ENCODE measurements at regions of chr4 and their contacts with region 1.

Region 1: DNA sequence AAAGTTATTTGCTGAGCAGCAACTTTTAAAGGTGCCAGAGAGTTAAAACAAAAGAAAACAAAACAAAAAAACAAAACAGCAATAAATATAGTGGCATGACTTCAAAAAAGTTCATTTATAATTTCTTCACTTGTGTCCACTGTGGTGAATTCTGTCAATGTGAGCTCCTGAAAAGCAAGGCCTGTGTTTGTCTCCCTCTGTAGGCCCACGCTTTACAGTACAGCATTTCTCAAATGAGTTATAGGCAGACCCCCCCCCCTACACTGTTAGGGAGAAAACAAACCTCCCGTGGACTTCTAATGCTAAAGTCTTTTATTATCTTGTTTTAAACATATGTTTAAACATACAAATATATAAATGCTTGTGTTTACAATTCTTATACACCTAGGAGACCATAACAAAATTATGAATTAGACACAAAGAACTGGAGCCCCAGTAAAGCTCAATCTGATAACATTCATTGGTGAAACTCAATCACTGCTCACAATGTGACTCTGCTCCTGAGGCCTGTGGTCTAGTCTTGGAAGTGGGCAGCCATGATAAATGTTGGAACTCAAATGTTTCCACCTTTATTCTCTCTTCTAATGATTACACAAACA is 47.0 kb upstream of the SCOC start:
- DNase-seq: peak; percentile 31
- ATAC-seq: no peak
- H3K4me3 Mint-ChIP-seq: no peak overlapping the region
- H3K27ac Mint-ChIP-seq: no peak overlapping the region
- H3K4me1 Mint-ChIP-seq: peaks cover 4% of the 10 kb centered on the region
- H3K27me3 Mint-ChIP-seq: peaks cover 3% of the 10 kb centered on the region

Region 2: DNA sequence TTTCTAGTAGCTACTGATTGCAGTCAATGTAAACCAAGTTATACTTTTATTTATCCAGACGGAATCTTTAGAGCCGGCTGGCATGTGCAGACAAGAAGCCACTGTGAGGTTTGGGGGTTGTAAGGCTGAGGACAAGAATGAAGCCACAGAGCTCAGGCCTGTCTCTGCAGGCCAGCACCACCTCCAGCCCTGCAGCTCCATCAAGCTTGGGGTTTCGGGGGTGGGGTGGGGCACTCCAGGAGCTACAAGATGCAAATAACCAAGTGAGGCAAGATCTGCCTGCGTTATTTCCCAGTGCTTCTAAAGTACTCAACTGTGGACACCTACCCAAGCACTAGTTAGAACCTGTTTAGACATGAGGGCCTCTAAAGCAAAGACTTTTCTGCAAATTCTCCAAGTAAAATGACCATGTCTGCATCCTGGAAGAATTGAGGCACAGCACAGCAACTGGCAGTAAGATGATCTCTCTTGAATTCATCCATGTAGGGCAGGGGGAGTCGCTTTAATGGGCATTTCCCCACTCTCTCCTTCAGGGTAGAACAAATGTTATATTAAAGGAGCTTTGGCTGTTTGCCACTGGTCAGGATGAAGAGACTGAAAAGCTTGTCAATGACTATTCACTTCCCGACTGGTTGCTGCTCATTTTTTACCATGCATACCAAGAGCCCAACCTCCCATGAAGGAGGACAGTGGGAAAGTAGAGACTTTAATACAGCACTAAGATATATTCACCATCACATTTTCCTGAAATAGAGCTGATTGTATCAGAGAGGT is 438.3 kb before region 1 on chr4:
- CTCF ChIA-PET with region 1: no interaction called
- POLR2A ChIA-PET with region 1: no interaction called
- intact Hi-C with region 1: no loop called
- DNase-seq: no peak
- ATAC-seq: no peak
- H3K4me3 Mint-ChIP-seq: no peak overlapping the region
- H3K27ac Mint-ChIP-seq: no peak overlapping the region
- H3K4me1 Mint-ChIP-seq: peaks cover 5% of the 10 kb centered on the region
- H3K27me3 Mint-ChIP-seq: peaks cover 1% of the 10 kb centered on the region

Region 3: GRCh38 chr4:140012688-140013486 is 313.6 kb before region 1 on chr4:
- CTCF ChIA-PET with region 1: no interaction called
- POLR2A ChIA-PET with region 1: no interaction called
- intact Hi-C with region 1: loop called in 1 of 2 experiments (anchors 2 kb)
- DNase-seq: peak; percentile 64
- ATAC-seq: peak; percentile 73
- H3K4me3 Mint-ChIP-seq: no peak overlapping the region
- H3K27ac Mint-ChIP-seq: no peak overlapping the region
- H3K4me1 Mint-ChIP-seq: peaks cover 9% of the 10 kb centered on the region
- H3K27me3 Mint-ChIP-seq: peaks cover 5% of the 10 kb centered on the region

Measured in activated CD4-positive, alpha-beta T cell treated with anti-CD3 and anti-CD28 coated beads for 36 hours (primary cell).